Naive thymus-derived CD8-positive, alpha-beta T cell (primary cell): ENCODE measurements at regions of chr3 and their contacts with region 1.

Region 1: DNA sequence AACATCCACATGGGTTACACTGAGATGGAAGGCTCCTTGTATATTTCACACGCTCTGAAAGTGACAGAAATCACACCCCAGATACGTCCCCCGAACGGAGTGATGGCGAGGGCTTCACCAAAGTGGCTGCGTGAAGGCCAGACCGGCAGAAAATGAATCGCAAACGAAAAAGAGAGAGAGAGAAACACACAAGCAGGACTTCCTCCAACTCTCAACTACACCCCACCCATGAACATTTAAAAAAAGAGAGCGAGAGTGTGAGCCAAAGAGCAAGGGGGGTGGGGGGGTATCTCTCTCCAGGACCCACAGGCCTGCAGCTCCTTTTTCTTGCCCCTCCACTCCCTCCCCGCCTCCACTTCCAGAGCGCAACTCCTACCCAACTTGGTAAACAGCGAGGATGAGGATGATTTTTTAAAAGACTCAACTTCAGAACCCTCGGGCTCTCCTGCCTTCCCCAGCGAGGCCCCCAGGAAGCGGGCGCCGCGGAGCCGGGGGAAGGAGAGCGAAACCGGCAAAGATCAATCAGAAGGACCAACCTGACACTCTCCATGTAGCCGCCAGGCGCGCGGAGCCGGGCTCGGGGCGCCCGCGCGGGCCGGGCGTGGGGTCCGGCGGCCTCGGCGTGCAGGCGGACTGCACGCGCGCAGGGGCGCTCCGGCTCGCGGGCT is 519.1 kb downstream of the FOXP1 start:
- DNase-seq: peak; percentile 38 to 86 (median 76)
- ATAC-seq: peak; percentile 51 to 60
- H3K4me3 Mint-ChIP-seq: no peak overlapping the region
- H3K27ac Mint-ChIP-seq: no peak overlapping the region
- H3K4me1 Mint-ChIP-seq: peaks cover 33 to 71% (median 50%) of the 10 kb centered on the region in 4 donors
- H3K27me3 Mint-ChIP-seq: no peaks in the 10 kb centered on the region

Region 2: DNA sequence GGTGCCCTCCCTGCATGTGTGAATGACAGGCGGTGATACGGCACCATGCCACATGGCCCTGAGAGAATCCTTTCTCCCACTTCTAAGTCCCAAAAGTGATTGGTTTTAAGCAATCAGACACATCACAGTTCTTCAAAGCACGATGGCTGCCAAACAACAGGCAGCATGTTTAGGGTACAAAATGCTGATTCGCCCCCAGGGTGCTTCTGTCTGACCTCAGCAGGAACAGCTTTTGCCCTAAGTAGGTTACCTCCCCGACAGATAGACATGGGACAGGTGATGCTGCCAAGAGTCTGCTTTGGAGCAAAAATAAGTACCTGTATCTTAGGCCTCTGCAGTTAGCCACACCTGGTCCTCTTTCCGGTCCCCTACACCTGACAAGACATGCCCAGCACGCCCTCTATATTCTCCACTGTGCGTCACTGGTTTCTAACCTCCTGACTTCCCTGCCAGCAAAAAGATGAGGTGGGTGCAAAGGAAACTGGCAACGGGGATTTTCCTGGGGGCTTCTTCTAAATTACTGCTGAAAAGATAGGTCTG is 30.7 kb before region 1 on chr3:
- POLR2A ChIA-PET with region 1: interaction called, 11 read pairs
- DNase-seq: no peak
- ATAC-seq: no peak
- H3K4me3 Mint-ChIP-seq: peak overlapping the region in 7 of 10 donors; percentile 5 to 71 (median 50)
- H3K27ac Mint-ChIP-seq: peak overlapping the region; percentile 54 to 87 (median 82)
- H3K4me1 Mint-ChIP-seq: peaks cover 49 to 94% (median 90%) of the 10 kb centered on the region in 4 donors
- H3K27me3 Mint-ChIP-seq: no peaks in the 10 kb centered on the region

Region 3: GRCh38 chr3:71050538-71051258 is 13.7 kb before region 1 on chr3:
- POLR2A ChIA-PET with region 1: interaction called, 24 read pairs
- DNase-seq: peak in 6 of 10 donors; percentile 41 to 82 (median 58)
- ATAC-seq: peak; percentile 93 to 95
- H3K4me3 Mint-ChIP-seq: peak overlapping the region; percentile 29 to 78 (median 72)
- H3K27ac Mint-ChIP-seq: peak overlapping the region in 9 of 10 donors; percentile 89 to 98 (median 93)
- H3K4me1 Mint-ChIP-seq: peaks cover 5 to 100% (median 78%) of the 10 kb centered on the region in 4 donors
- H3K27me3 Mint-ChIP-seq: no peaks in the 10 kb centered on the region